ENCODE measurements at regions of chr9 and their contacts with region 1.

Region 1: GRCh38 chr9:120265791-120266190 is 314.2 kb downstream of the CDK5RAP2 start:
- DNase-seq: peak in 4 of 5 donors; percentile 67 to 88 (median 80)
- ATAC-seq: peak; percentile 99 to 100 (median 100)
- H3K4me3 ChIP-seq: no peak overlapping the region
- H3K27ac ChIP-seq: peak overlapping the region in 5 of 12 donors; percentile 28 to 67 (median 52)
- H3K4me1 ChIP-seq: peaks cover 0 to 13% (median 0%) of the 10 kb centered on the region in 12 donors
- H3K27me3 ChIP-seq: no peaks in the 10 kb centered on the region
- CTCF ChIP-seq: no peak
- POLR2A ChIP-seq: no peak

Region 2: GRCh38 chr9:118992813-118993794 is 1272.7 kb before region 1 on chr9:
- intact Hi-C with region 1: loop called in 1 of 10 experiments (anchors 10 kb)
- DNase-seq: no peak
- ATAC-seq: peak in 1 of 4 donors; percentile 43
- H3K4me3 ChIP-seq: no peak overlapping the region
- H3K27ac ChIP-seq: no peak overlapping the region
- H3K4me1 ChIP-seq: peaks cover 0 to 21% (median 0%) of the 10 kb centered on the region in 12 donors
- H3K27me3 ChIP-seq: no peaks in the 10 kb centered on the region
- CTCF ChIP-seq: peak in 3 of 12 donors; percentile 11 to 25 (median 15)
- POLR2A ChIP-seq: no peak

Region 3: GRCh38 chr9:120080849-120081248 is 184.9 kb before region 1 on chr9:
- intact Hi-C with region 1: no loop called
- DNase-seq: no peak
- ATAC-seq: no peak
- H3K4me3 ChIP-seq: no peak overlapping the region
- H3K27ac ChIP-seq: no peak overlapping the region
- H3K4me1 ChIP-seq: no peaks in the 10 kb centered on the region
- H3K27me3 ChIP-seq: peaks cover 0 to 14% (median 0%) of the 10 kb centered on the region in 9 donors
- CTCF ChIP-seq: no peak
- POLR2A ChIP-seq: no peak

Region 4: DNA sequence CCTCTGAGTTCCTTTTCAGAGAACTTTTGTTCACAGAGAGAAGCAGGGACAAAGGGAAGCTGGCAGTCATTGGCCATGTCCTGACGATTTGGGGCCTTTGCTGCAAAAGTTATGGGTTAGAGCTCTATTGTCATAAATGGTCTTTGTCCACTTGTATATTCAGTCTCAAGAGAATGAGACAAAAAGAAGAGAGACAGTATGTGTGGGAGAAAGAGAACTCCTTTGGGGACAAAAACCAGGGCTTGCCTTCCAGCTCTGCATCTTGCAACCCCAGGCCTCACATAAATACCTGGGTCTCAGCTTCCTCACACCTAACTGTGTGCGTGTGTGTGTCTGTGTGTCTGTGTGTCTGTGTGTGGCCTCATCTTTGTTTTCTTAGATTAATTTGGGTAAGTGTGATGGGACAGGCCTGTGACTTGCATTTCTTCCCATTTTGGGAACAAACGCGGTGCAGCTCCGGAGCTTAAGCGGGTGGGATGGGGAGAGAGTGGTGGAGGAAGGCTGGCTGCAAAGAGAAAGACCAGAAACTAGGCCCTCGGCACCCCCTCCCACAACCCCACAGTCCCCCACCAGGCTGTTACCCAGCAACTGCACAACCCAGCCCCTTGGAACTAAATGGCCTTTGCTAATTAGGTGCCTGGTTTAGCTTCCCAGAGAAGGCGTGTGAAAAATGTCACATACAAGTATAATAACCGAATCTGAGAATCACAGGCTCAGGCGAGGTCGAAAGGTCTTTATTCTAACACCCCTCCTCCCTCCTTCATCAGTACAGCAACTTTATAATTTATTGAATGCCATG is 62.7 kb before region 1 on chr9:
- intact Hi-C with region 1: loop called in 1 of 10 experiments (anchors 10 kb)
- DNase-seq: no peak
- ATAC-seq: no peak
- H3K4me3 ChIP-seq: no peak overlapping the region
- H3K27ac ChIP-seq: no peak overlapping the region
- H3K4me1 ChIP-seq: no peaks in the 10 kb centered on the region
- H3K27me3 ChIP-seq: no peaks in the 10 kb centered on the region
- CTCF ChIP-seq: no peak
- POLR2A ChIP-seq: no peak

Measured in heart left ventricle (tissue), 16 donors.